IMR-90 (cell line): ENCODE measurements at regions of chr7 and their contacts with region 1.

Region 1: DNA sequence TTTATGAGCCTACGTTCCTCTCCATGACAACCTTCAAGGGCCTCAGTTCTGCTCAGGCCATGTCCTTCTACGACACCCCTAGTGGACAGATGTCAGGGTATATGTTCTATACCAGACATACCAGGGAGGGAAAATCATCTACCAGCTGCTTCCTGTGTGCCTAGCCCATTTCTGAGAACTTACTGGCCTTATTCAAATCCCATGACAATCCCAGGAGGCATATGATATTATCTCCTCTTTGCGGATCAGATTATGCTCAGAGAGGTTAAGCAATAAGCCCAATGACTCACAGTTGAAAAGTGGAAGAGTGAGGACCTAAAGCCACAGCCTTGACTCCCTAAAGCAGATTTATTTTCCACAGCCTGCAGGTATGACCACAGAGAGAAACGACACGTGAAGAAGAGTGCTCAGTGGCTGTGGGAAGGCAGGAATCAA is 139.2 kb downstream of the GLI3 start:
- DNase-seq: peak; percentile 89
- ATAC-seq: peak; percentile 47
- H3K4me3 ChIP-seq: no peak overlapping the region
- H3K27ac ChIP-seq: peak overlapping the region; percentile 56; the same call in 1 of the 2 replicates
- H3K4me1 ChIP-seq: peaks cover 29% of the 10 kb centered on the region
- H3K27me3 ChIP-seq: no peaks in the 10 kb centered on the region
- CTCF ChIP-seq: peak; percentile 16; the same call in 1 of the 2 replicates
- POLR2A ChIP-seq: no peak
- RAD21 ChIP-seq: no peak

Region 2: DNA sequence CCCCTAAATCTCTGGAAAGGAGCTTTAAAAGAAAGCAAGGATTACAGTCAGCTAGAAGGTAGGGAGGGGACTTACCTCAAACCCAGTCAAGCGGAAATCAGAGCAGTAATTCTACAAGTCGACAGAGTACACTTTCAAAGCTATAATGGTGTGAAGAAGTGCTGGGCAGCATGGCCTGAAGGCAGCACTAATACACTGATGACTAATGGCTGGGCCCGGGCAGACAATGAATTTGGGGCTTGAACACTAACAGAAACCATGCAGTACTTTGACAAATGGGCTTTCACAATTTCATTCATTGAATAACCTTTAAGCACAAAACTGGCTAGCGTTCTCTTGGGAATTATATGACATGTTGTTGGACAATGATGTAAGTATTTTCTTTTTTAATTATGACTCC is 134.5 kb after region 1 on chr7:
- CTCF ChIA-PET with region 1: no interaction called
- POLR2A ChIA-PET with region 1: no interaction called
- dilution Hi-C with region 1: no loop called
- in situ Hi-C with region 1: no loop called
- intact Hi-C with region 1: loop called (anchors 5 kb)
- DNase-seq: peak; percentile 31
- ATAC-seq: no peak
- H3K4me3 ChIP-seq: no peak overlapping the region
- H3K27ac ChIP-seq: no peak overlapping the region
- H3K4me1 ChIP-seq: peaks cover 10% of the 10 kb centered on the region
- H3K27me3 ChIP-seq: no peaks in the 10 kb centered on the region
- CTCF ChIP-seq: no peak
- POLR2A ChIP-seq: no peak
- RAD21 ChIP-seq: no peak